GM12878 (cell line): ENCODE measurements at regions of chr15 and their contacts with region 1.

Region 1: DNA sequence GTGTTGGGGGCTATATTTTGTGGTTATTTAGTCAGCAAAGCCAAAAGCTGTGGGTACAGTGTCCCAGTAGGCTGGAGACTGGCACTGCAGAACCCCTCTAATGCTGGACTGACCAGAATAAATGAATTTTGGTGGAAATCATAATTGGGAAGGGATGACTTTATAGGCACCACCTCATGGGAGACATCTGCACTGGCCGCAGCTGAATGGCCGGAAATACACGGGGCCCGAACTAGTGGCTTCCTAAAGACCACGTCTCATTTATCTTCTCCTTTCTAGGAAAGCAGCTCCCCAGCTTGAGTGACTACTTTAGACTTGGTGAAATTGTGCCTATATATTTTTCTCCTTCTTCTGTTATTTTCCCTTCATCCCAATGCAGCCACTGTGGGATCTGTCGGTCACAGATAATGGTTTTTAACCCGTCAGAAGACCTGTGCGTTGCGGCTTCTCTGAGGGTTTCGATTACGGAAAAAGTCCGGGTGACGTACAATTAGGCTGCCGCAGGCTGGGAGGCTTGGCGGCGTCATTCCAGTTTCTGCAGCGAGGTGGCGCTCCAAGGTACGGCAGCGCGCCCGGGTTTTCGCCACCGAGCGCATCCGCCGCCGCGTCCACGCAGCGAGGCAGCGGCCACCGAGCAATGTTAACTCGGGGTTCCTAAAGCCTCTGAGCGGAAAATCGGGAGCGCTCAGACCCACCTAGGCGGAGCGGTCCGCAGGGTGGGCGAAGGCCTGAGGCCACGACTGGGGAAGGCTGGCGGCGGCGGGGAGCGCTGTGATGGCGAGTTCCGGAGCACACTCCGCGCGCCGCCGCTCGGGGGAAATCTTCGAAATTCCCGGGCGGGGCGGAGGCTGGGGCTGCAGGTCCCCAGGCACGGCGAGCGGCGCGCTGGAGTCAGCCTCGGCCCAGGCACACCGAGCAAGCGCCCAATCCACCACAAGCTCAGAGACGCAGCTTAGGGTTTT is 26.3 kb downstream of the NR2F2 start:
- DNase-seq: peak; percentile 47
- ATAC-seq: peak; percentile 57
- H3K4me3 ChIP-seq: peak overlapping the region; percentile 60; the same call in 1 of the 2 replicates
- H3K27ac ChIP-seq: no peak overlapping the region; the same call in 1 of the 2 replicates
- H3K4me1 ChIP-seq: peaks cover 6% of the 10 kb centered on the region; the same call in 1 of the 2 replicates
- H3K27me3 ChIP-seq: peaks cover 2 to 18% of the 10 kb centered on the region in 2 experiments
- CTCF ChIP-seq: peak; percentile 86 to 95 (median 92)
- EP300 ChIP-seq: peak; percentile 55 to 81; a peak in 3 of 4 replicates
- POLR2A ChIP-seq: no peak
- RAD21 ChIP-seq: peak; percentile 50

Region 2: GRCh38 chr15:95715906-95716656 is 640.7 kb before region 1 on chr15:
- CTCF ChIA-PET with region 1: no interaction called
- POLR2A ChIA-PET with region 1: no interaction called
- RAD21 ChIA-PET with region 1: no interaction called
- SMC1A ChIA-PET with region 1: no interaction called
- in situ Hi-C with region 1: no loop called
- intact Hi-C with region 1: no loop called
- DNase-seq: no peak
- ATAC-seq: no peak
- H3K4me3 ChIP-seq: no peak overlapping the region
- H3K27ac ChIP-seq: no peak overlapping the region
- H3K4me1 ChIP-seq: no peaks in the 10 kb centered on the region
- H3K27me3 ChIP-seq: no peaks in the 10 kb centered on the region
- CTCF ChIP-seq: no peak
- EP300 ChIP-seq: no peak
- POLR2A ChIP-seq: no peak
- RAD21 ChIP-seq: no peak

Region 3: GRCh38 chr15:96336642-96337364 is 20.0 kb before region 1 on chr15:
- CTCF ChIA-PET with region 1: interaction called, 5 read pairs
- POLR2A ChIA-PET with region 1: interaction called, 11 read pairs
- RAD21 ChIA-PET with region 1: interaction called, 124 read pairs
- SMC1A ChIA-PET with region 1: interaction called, 7 read pairs
- in situ Hi-C with region 1: no loop called
- intact Hi-C with region 1: no loop called
- DNase-seq: no peak
- ATAC-seq: peak; percentile 17
- H3K4me3 ChIP-seq: peak overlapping the region; percentile 11; the same call in 1 of the 2 replicates
- H3K27ac ChIP-seq: peak overlapping the region; percentile 44; the same call in 1 of the 2 replicates
- H3K4me1 ChIP-seq: no peaks in the 10 kb centered on the region
- H3K27me3 ChIP-seq: no peaks in the 10 kb centered on the region
- CTCF ChIP-seq: no peak
- EP300 ChIP-seq: no peak
- POLR2A ChIP-seq: no peak
- RAD21 ChIP-seq: no peak

Region 4: DNA sequence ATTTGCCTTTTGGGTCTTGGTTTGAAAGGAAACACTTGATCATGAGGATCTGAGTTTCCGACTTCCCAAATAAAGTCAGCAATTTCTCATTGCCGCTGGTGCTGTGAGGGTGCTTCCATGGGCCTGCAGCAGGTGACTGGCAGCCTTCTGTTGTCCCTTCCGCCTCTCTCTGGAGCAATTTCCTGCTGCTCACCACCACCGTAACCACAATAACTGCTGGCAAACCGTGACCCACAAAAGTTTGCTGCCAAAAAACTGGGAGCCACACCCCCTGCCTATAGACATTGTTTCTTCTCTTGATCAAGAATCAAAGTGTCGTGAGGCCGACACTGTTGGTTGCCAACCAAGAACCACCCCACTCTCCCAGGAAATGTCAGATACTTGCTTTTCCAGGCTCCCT is 137.7 kb after region 1 on chr15:
- CTCF ChIA-PET with region 1: interaction called, 4 read pairs
- POLR2A ChIA-PET with region 1: no interaction called
- RAD21 ChIA-PET with region 1: interaction called, 14 read pairs
- SMC1A ChIA-PET with region 1: no interaction called
- in situ Hi-C with region 1: no loop called
- intact Hi-C with region 1: no loop called
- DNase-seq: no peak
- ATAC-seq: no peak
- H3K4me3 ChIP-seq: no peak overlapping the region
- H3K27ac ChIP-seq: no peak overlapping the region
- H3K4me1 ChIP-seq: no peaks in the 10 kb centered on the region
- H3K27me3 ChIP-seq: no peaks in the 10 kb centered on the region
- CTCF ChIP-seq: no peak
- EP300 ChIP-seq: no peak
- POLR2A ChIP-seq: no peak
- RAD21 ChIP-seq: no peak

Region 5: DNA sequence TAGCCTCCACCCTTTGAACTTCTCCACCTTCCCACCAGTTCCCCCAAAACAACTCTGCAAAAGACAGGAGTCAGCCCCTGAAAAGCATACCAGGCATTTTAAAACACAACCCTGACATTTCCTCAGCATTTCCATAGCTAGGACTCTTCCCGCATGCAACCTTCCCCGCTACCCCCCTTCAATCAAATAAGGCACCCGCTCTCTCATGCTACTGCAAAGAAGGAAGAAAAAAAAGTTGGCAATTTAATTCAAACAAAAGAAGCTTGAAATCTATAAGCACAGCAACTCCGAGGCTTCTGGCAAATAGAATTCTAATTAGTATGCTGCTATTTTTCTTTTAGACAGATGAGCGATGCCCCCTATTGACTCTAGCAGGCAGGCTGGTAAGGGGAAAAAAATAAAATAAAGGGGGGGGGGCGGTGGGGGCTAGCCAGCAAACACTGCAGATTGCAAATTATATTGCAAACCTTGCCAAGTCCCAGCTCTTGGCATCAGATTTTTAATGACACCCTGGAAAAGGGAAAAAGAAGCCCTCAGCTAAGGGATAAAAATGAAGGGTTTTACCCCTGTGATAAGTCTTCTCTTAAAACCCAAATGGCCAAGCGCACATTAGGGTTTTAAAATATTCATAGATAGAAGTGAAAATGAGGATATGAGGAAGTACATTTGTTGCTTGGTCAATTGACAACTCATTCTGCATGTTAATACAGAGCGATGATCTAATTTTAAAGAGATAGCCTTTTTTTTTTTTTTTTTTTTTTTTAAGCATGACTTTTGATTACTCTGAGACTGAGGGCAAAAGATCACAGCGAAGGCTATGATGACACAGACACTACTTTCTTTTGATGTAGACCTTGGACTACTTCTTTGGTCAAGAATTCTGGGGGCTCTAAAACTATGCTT is 229.0 kb after region 1 on chr15:
- CTCF ChIA-PET with region 1: interaction called, 12 read pairs
- POLR2A ChIA-PET with region 1: no interaction called
- RAD21 ChIA-PET with region 1: interaction called, 9 read pairs
- SMC1A ChIA-PET with region 1: interaction called, 8 read pairs
- in situ Hi-C with region 1: no loop called
- intact Hi-C with region 1: loop called (anchors 5 kb)
- DNase-seq: no peak
- ATAC-seq: peak; percentile 73
- H3K4me3 ChIP-seq: no peak overlapping the region
- H3K27ac ChIP-seq: no peak overlapping the region
- H3K4me1 ChIP-seq: no peaks in the 10 kb centered on the region
- H3K27me3 ChIP-seq: no peaks in the 10 kb centered on the region
- CTCF ChIP-seq: peak in 2 of 3 experiments; percentile 10 to 35; a peak in 2 of 6 replicates
- EP300 ChIP-seq: no peak
- POLR2A ChIP-seq: no peak
- RAD21 ChIP-seq: no peak

Region 6: GRCh38 chr15:96893159-96893906 is 536.6 kb after region 1 on chr15:
- CTCF ChIA-PET with region 1: interaction called, 10 read pairs
- POLR2A ChIA-PET with region 1: no interaction called
- RAD21 ChIA-PET with region 1: interaction called, 8 read pairs
- SMC1A ChIA-PET with region 1: interaction called, 3 read pairs
- in situ Hi-C with region 1: no loop called
- intact Hi-C with region 1: loop called (anchors 5 kb)
- DNase-seq: no peak
- ATAC-seq: peak; percentile 79
- H3K4me3 ChIP-seq: no peak overlapping the region
- H3K27ac ChIP-seq: no peak overlapping the region
- H3K4me1 ChIP-seq: no peaks in the 10 kb centered on the region
- H3K27me3 ChIP-seq: no peaks in the 10 kb centered on the region
- CTCF ChIP-seq: peak; percentile 16 to 69 (median 56); a peak in 5 of 6 replicates
- EP300 ChIP-seq: no peak
- POLR2A ChIP-seq: no peak
- RAD21 ChIP-seq: peak; percentile 34; the same call in 1 of the 2 replicates

Region 7: GRCh38 chr15:97140216-97140615 is 783.4 kb after region 1 on chr15:
- CTCF ChIA-PET with region 1: no interaction called
- POLR2A ChIA-PET with region 1: no interaction called
- RAD21 ChIA-PET with region 1: interaction called, 3 read pairs
- SMC1A ChIA-PET with region 1: no interaction called
- in situ Hi-C with region 1: no loop called
- intact Hi-C with region 1: loop called (anchors 10 kb)
- DNase-seq: no peak
- ATAC-seq: peak; percentile 71
- H3K4me3 ChIP-seq: no peak overlapping the region
- H3K27ac ChIP-seq: no peak overlapping the region
- H3K4me1 ChIP-seq: no peaks in the 10 kb centered on the region
- H3K27me3 ChIP-seq: no peaks in the 10 kb centered on the region
- CTCF ChIP-seq: no peak; a peak in 1 of 6 replicates
- EP300 ChIP-seq: no peak; a peak in 1 of 4 replicates
- POLR2A ChIP-seq: no peak
- RAD21 ChIP-seq: no peak

Region 8: GRCh38 chr15:97234851-97235610 is 878.3 kb after region 1 on chr15:
- CTCF ChIA-PET with region 1: interaction called, 8 read pairs
- POLR2A ChIA-PET with region 1: no interaction called
- RAD21 ChIA-PET with region 1: interaction called, 10 read pairs
- SMC1A ChIA-PET with region 1: interaction called, 20 read pairs
- in situ Hi-C with region 1: loop called (anchors 10 kb)
- intact Hi-C with region 1: loop called (anchors 2 kb)
- DNase-seq: no peak
- ATAC-seq: peak; percentile 79
- H3K4me3 ChIP-seq: no peak overlapping the region
- H3K27ac ChIP-seq: no peak overlapping the region
- H3K4me1 ChIP-seq: no peaks in the 10 kb centered on the region
- H3K27me3 ChIP-seq: no peaks in the 10 kb centered on the region
- CTCF ChIP-seq: peak; percentile 66 to 74 (median 73)
- EP300 ChIP-seq: no peak
- POLR2A ChIP-seq: no peak
- RAD21 ChIP-seq: peak; percentile 84